ENCODE measurements at regions of chr11 and their contacts with region 1.

Region 1: GRCh38 chr11:695538-696248 is at the start of gene TMEM80:
- DNase-seq: peak; percentile 97 to 99 (median 99)
- H3K4me3 ChIP-seq: peak within 1 kb of the TSS; percentile 69 to 82
- H3K4me3 Mint-ChIP-seq: peak within 1 kb of the TSS; percentile 87 to 90 (median 88)
- H3K27ac ChIP-seq: peak within 1 kb of the TSS; percentile 98
- H3K27ac Mint-ChIP-seq: peak within 1 kb of the TSS; percentile 91 to 97 (median 95)
- H3K4me1 ChIP-seq: peaks cover 57% of the 10 kb centered on the region
- H3K4me1 Mint-ChIP-seq: peaks cover 31 to 58% (median 46%) of the 10 kb centered on the region in 4 donors
- H3K27me3 ChIP-seq: no peaks in the 10 kb centered on the region
- H3K27me3 Mint-ChIP-seq: no peaks in the 10 kb centered on the region
- total RNA-seq, gene TMEM80: 44.7 to 47.3 TPM

Region 2: GRCh38 chr11:269146-269890 is 426.4 kb before region 1 on chr11:
- CTCF ChIA-PET with region 1: no interaction called
- POLR2A ChIA-PET with region 1: no interaction called
- intact Hi-C with region 1: loop called (anchors 5 kb)
- DNase-seq: peak; percentile 82 to 91 (median 89)
- H3K4me3 ChIP-seq: peak overlapping the region; percentile 6 to 62
- H3K4me3 Mint-ChIP-seq: peak overlapping the region; percentile 81 to 95 (median 87)
- H3K27ac ChIP-seq: peak overlapping the region; percentile 72
- H3K27ac Mint-ChIP-seq: peak overlapping the region; percentile 91 to 99 (median 96)
- H3K4me1 ChIP-seq: peaks cover 25% of the 10 kb centered on the region
- H3K4me1 Mint-ChIP-seq: peaks cover 20 to 34% (median 28%) of the 10 kb centered on the region in 4 donors
- H3K27me3 ChIP-seq: no peaks in the 10 kb centered on the region
- H3K27me3 Mint-ChIP-seq: no peaks in the 10 kb centered on the region

Region 3: GRCh38 chr11:535519-536454 is 159.9 kb before region 1 on chr11 and contains the start of gene HRAS:
- CTCF ChIA-PET with region 1: interaction called, 5 read pairs
- POLR2A ChIA-PET with region 1: interaction called, 16 read pairs
- intact Hi-C with region 1: loop called (anchors 1 kb)
- DNase-seq: peak; percentile 93 to 98 (median 96)
- H3K4me3 ChIP-seq: peak within 1 kb of the TSS; percentile 29 to 69
- H3K4me3 Mint-ChIP-seq: peak within 1 kb of the TSS; percentile 90 to 98 (median 96)
- H3K27ac ChIP-seq: peak within 1 kb of the TSS; percentile 65
- H3K27ac Mint-ChIP-seq: peak within 1 kb of the TSS; percentile 92 to 98 (median 97)
- H3K4me1 ChIP-seq: peaks cover 40% of the 10 kb centered on the region
- H3K4me1 Mint-ChIP-seq: peaks cover 4 to 34% (median 16%) of the 10 kb centered on the region in 4 donors
- H3K27me3 ChIP-seq: no peaks in the 10 kb centered on the region
- H3K27me3 Mint-ChIP-seq: no peaks in the 10 kb centered on the region
- total RNA-seq, gene HRAS: 36.7 to 42.5 TPM

Region 4: GRCh38 chr11:568306-569157 is 127.2 kb before region 1 on chr11:
- CTCF ChIA-PET with region 1: interaction called, 4 read pairs
- POLR2A ChIA-PET with region 1: interaction called, 14 read pairs
- intact Hi-C with region 1: no loop called
- DNase-seq: peak; percentile 90 to 97 (median 95)
- H3K4me3 ChIP-seq: peak overlapping the region in 1 of 2 donors; percentile 58
- H3K4me3 Mint-ChIP-seq: peak overlapping the region; percentile 70 to 85 (median 76)
- H3K27ac ChIP-seq: peak overlapping the region; percentile 48
- H3K27ac Mint-ChIP-seq: no peak overlapping the region
- H3K4me1 ChIP-seq: peaks cover 15% of the 10 kb centered on the region
- H3K4me1 Mint-ChIP-seq: peaks cover 0 to 6% (median 5%) of the 10 kb centered on the region in 4 donors
- H3K27me3 ChIP-seq: no peaks in the 10 kb centered on the region
- H3K27me3 Mint-ChIP-seq: no peaks in the 10 kb centered on the region

Region 5: DNA sequence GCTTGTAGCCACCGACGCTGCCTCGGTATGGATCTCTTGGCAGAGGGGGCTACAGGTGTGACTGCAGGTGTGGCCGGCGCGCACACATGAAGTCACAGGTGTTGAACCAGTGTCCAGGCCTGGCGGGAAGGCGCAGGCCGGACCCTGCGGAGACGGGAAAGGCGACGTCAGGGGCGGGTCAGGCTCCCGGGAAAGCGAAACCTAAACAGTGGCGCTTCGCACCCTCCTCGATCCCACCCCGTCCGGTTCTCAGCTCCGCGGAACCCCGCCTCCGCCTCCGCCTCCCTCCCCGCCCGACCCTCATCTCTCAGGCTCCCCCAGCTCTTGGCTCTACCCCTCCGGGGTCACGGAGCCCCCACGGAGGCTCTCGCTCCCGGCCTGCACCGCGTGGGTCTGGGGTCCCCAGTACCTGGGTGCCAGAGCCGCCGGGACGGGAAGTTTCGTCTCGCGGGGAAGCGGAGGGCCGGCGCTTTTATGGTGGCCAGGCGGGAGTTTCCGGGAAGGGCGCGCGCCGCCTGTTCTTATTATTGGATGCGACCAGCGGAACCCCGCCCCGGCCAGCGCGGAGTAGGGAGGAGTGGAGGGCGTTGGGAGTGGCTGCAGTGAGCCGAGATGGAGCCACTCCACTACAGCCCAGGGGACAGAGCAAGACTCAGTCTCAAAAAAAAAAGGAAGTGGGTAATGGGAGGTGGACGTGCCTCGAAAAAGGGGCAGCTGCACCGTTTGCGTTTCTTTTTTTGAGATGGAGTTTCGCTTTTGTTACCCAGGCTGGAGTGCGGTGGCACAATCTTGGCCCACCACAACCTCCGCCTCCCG is 80.0 kb before region 1 on chr11 and contains the start of gene IRF7:
- CTCF ChIA-PET with region 1: interaction called, 3 read pairs
- POLR2A ChIA-PET with region 1: interaction called, 4 read pairs
- intact Hi-C with region 1: loop called (anchors 1 kb)
- DNase-seq: peak; percentile 79 to 89 (median 83)
- H3K4me3 ChIP-seq: peak within 1 kb of the TSS; percentile 78 to 80
- H3K4me3 Mint-ChIP-seq: peak within 1 kb of the TSS; percentile 90 to 96 (median 93)
- H3K27ac ChIP-seq: peak within 1 kb of the TSS; percentile 96
- H3K27ac Mint-ChIP-seq: peak within 1 kb of the TSS; percentile 89 to 96 (median 93)
- H3K4me1 ChIP-seq: peaks cover 29% of the 10 kb centered on the region
- H3K4me1 Mint-ChIP-seq: peaks cover 6 to 35% (median 20%) of the 10 kb centered on the region in 4 donors
- H3K27me3 ChIP-seq: no peaks in the 10 kb centered on the region
- H3K27me3 Mint-ChIP-seq: no peaks in the 10 kb centered on the region
- total RNA-seq, gene IRF7: 67.6 to 76.6 TPM

Region 6: DNA sequence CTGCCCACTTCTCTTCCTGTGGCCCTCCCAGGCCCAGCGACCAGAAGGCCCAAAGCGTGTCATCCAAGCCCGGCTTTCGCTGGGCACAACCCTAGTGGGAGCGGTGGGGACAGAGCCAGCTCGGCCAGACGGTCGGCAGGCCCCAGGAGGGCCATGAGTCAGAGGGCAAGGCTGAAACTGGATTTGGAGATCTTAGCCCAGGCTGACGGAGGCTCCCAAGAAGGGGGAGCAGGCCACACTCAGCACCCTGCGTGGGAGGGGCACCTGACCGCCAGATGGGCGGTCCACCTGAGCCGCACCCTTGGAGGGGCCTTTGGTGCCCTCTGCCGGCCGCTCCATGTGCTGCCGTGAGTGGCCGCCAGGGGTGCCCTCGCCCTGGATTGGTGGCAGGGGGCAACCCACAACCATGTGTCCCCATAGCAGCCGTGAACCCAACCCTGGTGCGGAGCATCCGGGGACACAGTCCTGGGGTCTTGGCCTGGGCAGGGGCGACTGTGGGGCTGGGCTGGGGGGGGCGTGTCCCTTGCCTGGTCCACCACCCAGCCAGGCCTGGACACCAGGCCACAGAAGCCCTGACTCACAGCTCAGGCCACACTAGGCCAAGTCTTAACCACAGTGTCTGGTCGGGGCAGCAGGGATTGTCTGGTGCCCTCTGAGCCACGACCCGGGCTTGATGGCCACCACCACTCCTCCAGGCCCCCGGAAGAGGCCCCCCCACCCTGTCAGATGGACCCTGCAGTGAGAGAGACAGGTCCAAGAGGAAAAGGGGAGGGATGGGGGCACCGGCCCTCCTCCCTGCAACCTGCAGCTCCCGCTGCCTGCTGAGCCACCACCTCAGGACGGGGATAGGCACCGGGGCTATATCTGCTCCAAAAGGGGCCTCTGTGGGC is 32.4 kb after region 1 on chr11:
- CTCF ChIA-PET with region 1: interaction called, 50 read pairs
- POLR2A ChIA-PET with region 1: interaction called, 109 read pairs
- intact Hi-C with region 1: loop called (anchors 1 kb)
- DNase-seq: peak; percentile 71 to 78 (median 75)
- H3K4me3 ChIP-seq: no peak overlapping the region
- H3K4me3 Mint-ChIP-seq: no peak overlapping the region
- H3K27ac ChIP-seq: no peak overlapping the region
- H3K27ac Mint-ChIP-seq: no peak overlapping the region
- H3K4me1 ChIP-seq: peaks cover 26% of the 10 kb centered on the region
- H3K4me1 Mint-ChIP-seq: peaks cover 4 to 13% (median 9%) of the 10 kb centered on the region in 4 donors
- H3K27me3 ChIP-seq: no peaks in the 10 kb centered on the region
- H3K27me3 Mint-ChIP-seq: peaks cover 1 to 2% of the 10 kb centered on the region in 2 donors

Region 7: GRCh38 chr11:798093-798713 is 102.5 kb after region 1 on chr11 and contains the start of gene SLC25A22:
- CTCF ChIA-PET with region 1: no interaction called
- POLR2A ChIA-PET with region 1: interaction called, 4 read pairs
- intact Hi-C with region 1: loop called (anchors 1 kb)
- DNase-seq: peak; percentile 80 to 90 (median 85)
- H3K4me3 ChIP-seq: peak within 1 kb of the TSS; percentile 73 to 91
- H3K4me3 Mint-ChIP-seq: peak within 1 kb of the TSS; percentile 86 to 97 (median 91)
- H3K27ac ChIP-seq: peak within 1 kb of the TSS; percentile 86
- H3K27ac Mint-ChIP-seq: peak within 1 kb of the TSS; percentile 93 to 96 (median 94)
- H3K4me1 ChIP-seq: peaks cover 32% of the 10 kb centered on the region
- H3K4me1 Mint-ChIP-seq: peaks cover 5 to 19% (median 10%) of the 10 kb centered on the region in 4 donors
- H3K27me3 ChIP-seq: no peaks in the 10 kb centered on the region
- H3K27me3 Mint-ChIP-seq: no peaks in the 10 kb centered on the region
- total RNA-seq, gene SLC25A22: 24.0 to 24.1 TPM